H1 (cell line): ENCODE measurements at regions of chr9 and their contacts with region 1.

Region 1: DNA sequence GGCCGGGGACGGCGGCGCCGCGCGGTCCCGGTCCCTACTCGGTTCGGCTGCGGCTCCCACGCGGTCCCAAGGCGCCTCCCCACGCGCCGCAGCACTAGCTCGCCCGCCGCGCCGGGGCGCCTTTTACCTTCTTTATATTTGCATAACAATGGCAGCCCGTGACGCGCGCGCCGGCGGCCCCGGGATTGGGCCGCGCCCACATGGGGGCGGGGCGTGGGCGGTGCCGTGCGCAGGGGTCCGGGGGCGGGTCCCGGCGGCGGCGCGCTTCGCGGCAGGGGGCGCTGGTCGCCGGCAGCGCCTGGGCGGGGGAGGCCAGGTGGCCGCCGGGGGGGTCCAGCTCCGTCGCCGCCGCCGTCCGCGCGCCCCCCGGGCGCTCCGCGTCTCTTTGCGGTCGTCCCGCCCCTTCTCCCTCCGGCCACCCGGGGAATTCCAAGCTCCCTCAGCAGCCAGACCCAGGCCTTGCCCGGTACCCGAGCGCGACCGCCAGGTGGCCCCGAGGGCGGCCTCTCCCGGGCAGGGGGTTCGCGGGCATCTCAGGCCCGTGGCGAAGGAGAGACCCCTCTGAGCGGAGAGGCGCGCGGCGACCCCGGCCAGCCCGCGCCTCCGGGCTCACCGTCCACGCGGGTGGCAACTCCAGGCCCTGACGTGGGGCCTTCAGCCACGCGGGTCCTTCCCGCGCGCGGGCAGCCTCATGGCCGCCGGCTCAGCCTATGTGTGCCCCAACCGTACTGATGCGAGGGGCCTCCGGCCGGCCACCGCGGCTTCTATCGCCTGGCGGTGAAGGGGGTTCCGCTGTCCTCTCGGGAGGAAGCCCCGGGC is at the start of gene NRARP:
- DNase-seq: peak in 1 of 2 experiments; percentile 94
- H3K4me3 ChIP-seq: peak within 1 kb of the TSS; percentile 83 to 97 (median 84)
- H3K27ac ChIP-seq: 0 out of 2 replicates have a peak within 1 kb of the TSS, but pooled peaks have one; percentile 33
- H3K4me1 ChIP-seq: peaks cover 3 to 57% (median 47%) of the 10 kb centered on the region in 4 experiments
- H3K27me3 ChIP-seq: peaks cover 0 to 16% (median 7%) of the 10 kb centered on the region in 4 experiments; a peak in 5 of 7 replicates
- CTCF ChIP-seq: peak in 2 of 3 experiments; percentile 56 to 74; a peak in 3 of 4 replicates
- EP300 ChIP-seq: no peak
- POLR2A ChIP-seq: peak in 1 of 2 experiments; percentile 78; a peak in 1 of 3 replicates
- RAD21 ChIP-seq: peak; percentile 32 to 54; a peak in 2 of 4 replicates
- total RNA-seq, gene NRARP: 35.4 and 37.2 TPM in 2 replicates

Region 2: DNA sequence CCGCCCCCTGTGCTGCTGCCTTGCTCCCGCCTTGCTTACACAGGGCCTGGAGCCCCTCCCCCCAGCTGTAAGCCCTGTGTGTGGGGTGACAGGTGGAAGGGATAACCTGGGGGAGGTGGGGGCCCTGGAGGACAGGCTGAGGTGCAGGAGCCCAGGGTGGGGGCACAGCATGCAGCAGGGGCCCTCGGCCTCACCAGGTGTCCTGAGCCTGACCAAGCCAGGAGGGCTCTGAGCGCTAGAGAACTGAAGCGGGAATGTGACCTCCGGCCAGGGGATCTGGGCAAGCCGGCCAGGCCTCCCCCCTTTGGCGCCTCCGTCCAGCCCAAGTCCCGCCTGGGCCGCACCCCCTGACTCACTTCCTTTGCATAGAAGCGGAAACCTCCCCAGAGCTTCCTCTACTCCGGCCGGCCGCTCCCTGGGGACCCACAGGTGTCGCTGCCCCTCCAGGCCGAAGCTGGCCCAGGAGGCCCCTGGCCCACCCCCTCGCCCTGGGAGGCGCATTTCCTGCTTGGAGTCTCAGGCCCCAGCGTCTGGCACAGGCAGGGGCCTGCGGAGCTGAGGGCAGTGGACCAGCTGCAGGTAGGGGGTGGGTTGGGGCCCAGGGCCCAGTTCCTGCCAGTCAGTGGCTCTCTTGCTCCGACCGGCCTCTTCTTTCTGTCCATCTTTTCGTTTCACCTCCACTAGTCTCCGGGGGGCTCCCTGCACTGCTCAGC is 24.9 kb before region 1 on chr9 and contains the start of gene TOR4A:
- CTCF ChIA-PET with region 1: interaction called, 5 read pairs
- POLR2A ChIA-PET with region 1: interaction called, 15 read pairs
- DNase-seq: peak in 1 of 2 experiments; percentile 86
- H3K4me3 ChIP-seq: peak within 1 kb of the TSS; percentile 26 to 70 (median 58)
- H3K27ac ChIP-seq: peak within 1 kb of the TSS; percentile 28; the same call in 1 of the 2 replicates
- H3K4me1 ChIP-seq: peaks cover 0 to 28% (median 19%) of the 10 kb centered on the region in 4 experiments; a peak in 6 of 7 replicates
- H3K27me3 ChIP-seq: peaks cover 2 to 27% (median 14%) of the 10 kb centered on the region in 4 experiments; a peak in 6 of 7 replicates
- CTCF ChIP-seq: peak in 1 of 3 experiments; percentile 21; a peak in 1 of 4 replicates
- EP300 ChIP-seq: no peak
- POLR2A ChIP-seq: peak in 1 of 2 experiments; percentile 41; a peak in 1 of 3 replicates
- RAD21 ChIP-seq: peak in 1 of 2 experiments; percentile 6; a peak in 1 of 4 replicates
- total RNA-seq, gene TOR4A: 9.2 and 9.3 TPM in 2 replicates

Region 3: DNA sequence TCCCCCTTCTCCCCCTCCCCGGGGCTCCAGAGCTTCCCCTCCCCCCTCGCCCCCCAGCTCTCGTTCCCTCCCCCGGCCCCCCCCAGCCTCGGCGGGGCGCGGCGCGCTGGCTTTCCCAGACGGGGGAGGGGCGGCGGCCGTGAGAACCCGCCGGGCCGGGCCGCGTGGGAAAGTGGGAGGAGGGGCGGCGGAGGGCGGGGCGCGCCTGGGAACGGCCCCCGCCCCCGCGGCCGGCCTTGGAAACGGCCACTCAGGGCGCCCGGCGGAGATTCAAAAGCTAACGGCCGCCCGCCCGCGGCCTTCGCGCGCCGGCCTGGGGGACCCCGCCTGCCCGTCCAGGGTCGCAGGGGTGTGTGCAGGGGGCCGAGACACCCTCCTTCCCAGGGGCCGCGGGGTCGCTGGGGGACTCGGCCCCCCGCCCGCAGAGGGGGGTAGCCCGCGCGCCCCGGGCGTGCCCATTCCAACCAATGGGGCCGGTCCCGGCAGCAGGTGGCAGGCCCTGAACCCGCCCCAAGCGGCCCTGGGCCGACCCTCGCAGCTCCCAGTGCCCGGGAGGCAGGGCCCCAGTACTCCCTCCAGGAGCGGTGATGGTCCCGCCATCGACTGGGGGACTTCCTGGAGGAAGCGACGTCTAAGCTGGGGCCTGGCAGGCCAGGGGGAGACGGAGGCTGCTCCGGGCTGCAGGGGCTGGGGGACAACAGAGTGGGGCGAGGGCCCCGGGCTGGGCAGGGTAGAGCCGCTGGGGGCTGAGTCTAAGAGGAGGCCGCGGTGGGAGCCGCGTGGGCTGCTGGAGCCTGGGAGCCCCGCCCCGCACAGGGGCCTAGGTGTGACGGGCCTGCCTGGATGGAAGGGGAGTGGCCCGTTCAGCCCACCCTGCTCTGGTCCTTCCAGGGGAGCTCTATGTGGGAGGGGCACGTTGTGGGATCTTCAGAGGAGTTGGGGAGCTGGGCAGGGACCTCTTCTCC is 13.9 kb after region 1 on chr9:
- CTCF ChIA-PET with region 1: interaction called, 55 read pairs
- POLR2A ChIA-PET with region 1: interaction called, 129 read pairs
- DNase-seq: peak in 1 of 2 experiments; percentile 79
- H3K4me3 ChIP-seq: peak overlapping the region; percentile 0 to 58 (median 12); a peak in 4 of 8 replicates
- H3K27ac ChIP-seq: no peak overlapping the region
- H3K4me1 ChIP-seq: peaks cover 0 to 32% (median 15%) of the 10 kb centered on the region in 4 experiments; a peak in 6 of 7 replicates
- H3K27me3 ChIP-seq: peaks cover 0 to 4% (median 0%) of the 10 kb centered on the region in 4 experiments; a peak in 2 of 7 replicates
- CTCF ChIP-seq: no peak; a peak in 1 of 4 replicates
- EP300 ChIP-seq: no peak
- POLR2A ChIP-seq: no peak
- RAD21 ChIP-seq: no peak